Activated CD4-positive, alpha-beta T cell treated with anti-CD3 and anti-CD28 coated beads for 36 hours (primary cell): ENCODE measurements at regions of chr3 and their contacts with region 1.

Region 1: GRCh38 chr3:105366326-105367062 is at the start of gene ALCAM:
- DNase-seq: peak; percentile 92
- ATAC-seq: peak; percentile 64
- H3K4me3 Mint-ChIP-seq: peak within 1 kb of the TSS; percentile 94
- H3K27ac Mint-ChIP-seq: peak within 1 kb of the TSS; percentile 99
- H3K4me1 Mint-ChIP-seq: peaks cover 43% of the 10 kb centered on the region
- H3K27me3 Mint-ChIP-seq: peaks cover 23% of the 10 kb centered on the region
- total RNA-seq, gene ALCAM: 22.0 TPM

Region 2: DNA sequence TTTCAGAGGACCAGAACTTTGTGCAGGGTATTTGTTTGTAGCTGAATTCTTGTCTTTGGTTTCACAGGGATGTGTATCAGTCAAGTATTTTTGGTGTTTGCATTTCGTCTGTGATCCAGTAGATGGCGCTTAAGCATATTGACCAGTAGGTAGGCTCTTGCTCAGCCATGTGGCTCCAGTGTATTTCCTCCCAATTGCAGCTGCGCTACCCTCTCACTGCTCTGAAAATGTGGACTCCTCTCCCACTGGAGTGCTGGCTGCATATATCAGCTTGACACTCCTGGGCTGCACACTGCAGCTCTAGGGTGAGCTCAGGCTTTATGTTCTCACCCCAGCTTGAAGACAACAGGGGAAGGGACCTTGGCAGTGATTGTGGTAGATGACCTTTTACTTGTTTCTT is 1264.1 kb before region 1 on chr3:
- CTCF ChIA-PET with region 1: no interaction called
- POLR2A ChIA-PET with region 1: no interaction called
- intact Hi-C with region 1: loop called in 1 of 2 experiments (anchors 5 kb)
- DNase-seq: peak; percentile 13
- ATAC-seq: peak; percentile 53
- H3K4me3 Mint-ChIP-seq: no peak overlapping the region
- H3K27ac Mint-ChIP-seq: no peak overlapping the region
- H3K4me1 Mint-ChIP-seq: no peaks in the 10 kb centered on the region
- H3K27me3 Mint-ChIP-seq: no peaks in the 10 kb centered on the region

Region 3: DNA sequence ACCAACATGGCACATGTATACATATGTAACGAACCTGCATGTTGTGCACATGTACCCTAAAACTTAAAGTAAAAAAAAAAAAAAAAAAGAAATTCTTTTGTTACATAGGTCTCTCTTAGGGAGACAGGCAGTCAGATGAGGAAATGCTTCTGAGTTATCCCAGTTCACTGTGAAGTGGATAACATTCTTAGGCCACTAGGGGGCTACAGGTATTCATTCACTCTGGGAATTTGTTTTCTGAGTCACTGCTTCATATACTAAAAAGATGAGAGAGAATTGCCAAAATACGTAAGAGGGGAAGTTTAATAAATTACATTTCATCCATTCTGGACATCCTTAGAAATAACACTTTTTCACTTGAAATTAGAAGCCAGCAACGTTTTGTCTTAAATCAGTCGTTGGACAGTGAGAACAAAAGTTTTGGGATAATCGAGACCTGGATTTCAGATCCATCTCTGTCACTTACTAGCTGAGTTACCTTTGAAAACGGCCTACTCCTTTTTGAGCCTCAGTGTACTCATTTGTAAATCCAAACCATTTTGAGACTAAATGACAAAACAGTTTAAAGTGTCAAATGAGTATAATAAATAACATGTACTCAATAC is 738.2 kb before region 1 on chr3:
- CTCF ChIA-PET with region 1: no interaction called
- POLR2A ChIA-PET with region 1: no interaction called
- intact Hi-C with region 1: loop called (anchors 2 to 5 kb)
- DNase-seq: no peak
- ATAC-seq: no peak
- H3K4me3 Mint-ChIP-seq: no peak overlapping the region
- H3K27ac Mint-ChIP-seq: no peak overlapping the region
- H3K4me1 Mint-ChIP-seq: no peaks in the 10 kb centered on the region
- H3K27me3 Mint-ChIP-seq: peaks cover 1% of the 10 kb centered on the region

Region 4: GRCh38 chr3:104750581-104750980 is 615.9 kb before region 1 on chr3:
- CTCF ChIA-PET with region 1: no interaction called
- POLR2A ChIA-PET with region 1: no interaction called
- intact Hi-C with region 1: no loop called
- DNase-seq: no peak
- ATAC-seq: no peak
- H3K4me3 Mint-ChIP-seq: no peak overlapping the region
- H3K27ac Mint-ChIP-seq: no peak overlapping the region
- H3K4me1 Mint-ChIP-seq: no peaks in the 10 kb centered on the region
- H3K27me3 Mint-ChIP-seq: no peaks in the 10 kb centered on the region

Region 5: GRCh38 chr3:105752744-105753415 is 386.4 kb after region 1 on chr3:
- CTCF ChIA-PET with region 1: no interaction called
- POLR2A ChIA-PET with region 1: no interaction called
- intact Hi-C with region 1: loop called in 1 of 2 experiments (anchors 5 kb)
- DNase-seq: peak; percentile 55
- ATAC-seq: peak; percentile 76
- H3K4me3 Mint-ChIP-seq: peak overlapping the region; percentile 42
- H3K27ac Mint-ChIP-seq: peak overlapping the region; percentile 95
- H3K4me1 Mint-ChIP-seq: peaks cover 78% of the 10 kb centered on the region
- H3K27me3 Mint-ChIP-seq: no peaks in the 10 kb centered on the region

Region 6: GRCh38 chr3:106013971-106014370 is 647.5 kb after region 1 on chr3:
- CTCF ChIA-PET with region 1: no interaction called
- POLR2A ChIA-PET with region 1: no interaction called
- intact Hi-C with region 1: loop called in 1 of 2 experiments (anchors 5 kb)
- DNase-seq: peak; percentile 19
- ATAC-seq: peak; percentile 72
- H3K4me3 Mint-ChIP-seq: no peak overlapping the region
- H3K27ac Mint-ChIP-seq: peak overlapping the region; percentile 68
- H3K4me1 Mint-ChIP-seq: peaks cover 50% of the 10 kb centered on the region
- H3K27me3 Mint-ChIP-seq: no peaks in the 10 kb centered on the region

Region 7: GRCh38 chr3:106299300-106300098 is 933.0 kb after region 1 on chr3:
- CTCF ChIA-PET with region 1: no interaction called
- POLR2A ChIA-PET with region 1: no interaction called
- intact Hi-C with region 1: loop called in 1 of 2 experiments (anchors 10 kb)
- DNase-seq: peak; percentile 39
- ATAC-seq: peak; percentile 76
- H3K4me3 Mint-ChIP-seq: no peak overlapping the region
- H3K27ac Mint-ChIP-seq: no peak overlapping the region
- H3K4me1 Mint-ChIP-seq: peaks cover 53% of the 10 kb centered on the region
- H3K27me3 Mint-ChIP-seq: no peaks in the 10 kb centered on the region

Region 8: DNA sequence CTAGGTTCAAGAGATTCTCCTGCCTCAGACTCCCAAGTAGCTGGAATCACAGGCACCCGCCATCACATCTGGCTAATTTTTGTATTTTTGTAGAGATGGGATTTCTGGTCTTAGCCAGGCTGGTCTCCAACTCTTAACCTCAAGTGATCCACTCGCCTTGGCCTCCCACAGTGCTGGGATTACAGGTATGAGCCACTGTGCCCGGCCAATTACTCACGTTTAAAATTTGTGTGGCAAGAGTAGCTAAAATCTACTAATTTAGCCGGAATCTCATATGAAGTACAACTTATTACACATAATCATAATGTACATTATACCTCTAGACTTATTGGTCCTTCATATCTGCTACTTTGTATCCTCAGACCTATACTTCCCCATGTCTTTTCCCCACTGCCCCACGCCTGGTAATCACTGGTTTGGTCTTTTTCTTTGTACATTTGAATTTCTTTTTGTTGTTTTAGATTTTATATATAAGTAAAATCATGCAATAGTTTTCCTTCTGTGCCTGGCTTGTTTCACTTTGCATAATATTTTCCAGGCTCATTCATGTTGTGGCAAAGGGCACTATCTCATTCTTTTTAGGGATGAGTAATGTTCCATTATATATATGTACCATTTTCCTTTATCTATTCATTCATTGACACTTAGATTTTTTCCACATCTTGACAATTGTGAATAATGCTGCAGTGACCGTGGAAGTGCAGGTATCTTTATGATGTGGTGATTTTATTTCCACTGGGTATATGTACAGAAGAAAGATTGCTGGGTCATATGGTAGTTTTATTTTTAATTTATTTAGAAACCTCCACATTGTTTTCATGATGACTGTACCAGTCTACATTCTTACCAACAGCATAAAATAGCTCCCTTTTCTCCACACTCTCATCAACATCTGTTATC is 1107.3 kb after region 1 on chr3:
- CTCF ChIA-PET with region 1: no interaction called
- POLR2A ChIA-PET with region 1: no interaction called
- intact Hi-C with region 1: loop called in 1 of 2 experiments (anchors 5 kb)
- DNase-seq: peak; percentile 47
- ATAC-seq: peak; percentile 86
- H3K4me3 Mint-ChIP-seq: no peak overlapping the region
- H3K27ac Mint-ChIP-seq: peak overlapping the region; percentile 88
- H3K4me1 Mint-ChIP-seq: peaks cover 28% of the 10 kb centered on the region
- H3K27me3 Mint-ChIP-seq: no peaks in the 10 kb centered on the region